AG04450 (cell line): ENCODE measurements at regions of chrX and their contacts with region 1.

Region 1: DNA sequence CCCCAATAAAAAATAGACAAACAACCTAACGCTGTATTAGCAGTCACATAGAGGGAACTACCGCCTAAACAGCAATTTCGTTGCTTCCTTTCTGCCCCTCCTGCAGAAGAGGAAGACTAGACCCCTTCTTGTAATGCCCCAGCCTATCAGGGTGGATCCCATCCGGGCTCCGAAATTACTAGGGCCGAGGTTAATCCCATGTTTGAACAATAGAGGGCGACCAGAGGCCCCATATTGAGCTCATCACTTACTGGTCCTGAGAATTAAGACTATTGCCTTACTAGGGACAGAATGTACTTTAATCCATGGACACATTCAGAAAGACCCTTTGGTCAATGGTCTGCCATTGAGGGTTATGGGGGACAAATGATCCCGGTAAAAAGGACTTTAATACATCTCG is 11.8 kb upstream of the ZNF630 start:
- DNase-seq: peak; percentile 2
- H3K4me3 ChIP-seq: no peak overlapping the region
- H3K27ac ChIP-seq: no peak overlapping the region
- H3K27me3 ChIP-seq: no peaks in the 10 kb centered on the region
- CTCF ChIP-seq: peak; percentile 63

Region 2: DNA sequence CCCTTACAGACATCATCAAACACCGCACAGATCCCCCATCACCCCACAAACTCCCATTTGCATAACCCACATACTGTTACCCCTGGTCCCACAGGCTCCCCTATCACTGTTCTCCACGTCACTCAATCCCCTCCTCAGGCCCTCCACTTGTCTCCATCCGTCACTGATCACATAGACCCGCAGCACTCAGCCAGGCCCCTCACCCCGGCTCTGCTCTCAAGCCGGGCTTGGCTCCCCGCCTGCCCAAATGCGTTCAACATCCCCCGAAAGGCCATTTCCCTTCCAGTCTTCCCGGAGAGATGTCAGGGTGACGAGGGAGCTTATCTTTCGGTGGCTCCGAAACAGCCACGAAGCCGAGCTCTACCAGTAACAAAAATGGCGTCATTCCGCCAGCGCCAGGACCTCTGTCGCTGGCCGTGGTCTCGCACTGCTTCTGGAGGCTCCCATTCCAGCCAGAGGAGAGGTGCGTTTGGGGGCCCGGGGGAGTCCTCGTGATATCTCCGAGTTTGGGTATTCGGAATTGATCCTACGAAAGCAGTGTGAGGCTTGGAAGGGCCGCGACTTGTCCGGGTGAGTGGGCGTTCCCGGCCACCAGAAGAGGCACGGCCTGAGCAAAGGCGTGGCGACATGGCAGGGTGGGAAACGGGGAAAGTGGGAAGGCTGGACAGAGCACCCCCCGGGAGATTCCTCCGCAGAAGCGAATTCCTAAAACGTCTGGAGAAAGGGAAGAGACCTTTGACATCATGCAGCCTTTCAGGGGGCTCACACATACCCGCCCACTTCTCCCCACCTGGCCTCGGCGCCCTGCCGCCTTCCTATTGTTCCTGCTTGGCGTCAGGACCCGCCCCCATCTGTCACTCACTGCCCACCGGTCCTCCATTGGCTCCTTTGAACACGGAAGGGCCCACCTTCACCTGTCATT is 11.9 kb before region 1 on chrX and contains the start of gene ZNF630:
- CTCF ChIA-PET with region 1: no interaction called
- POLR2A ChIA-PET with region 1: no interaction called
- DNase-seq: no peak
- H3K4me3 ChIP-seq: peak within 1 kb of the TSS; percentile 54
- H3K27ac ChIP-seq: no peak within 1 kb of the TSS
- H3K27me3 ChIP-seq: no peaks in the 10 kb centered on the region
- CTCF ChIP-seq: no peak
- polyA plus RNA-seq, gene ZNF630: 0.69 and 0.77 TPM in 2 replicates

Region 3: DNA sequence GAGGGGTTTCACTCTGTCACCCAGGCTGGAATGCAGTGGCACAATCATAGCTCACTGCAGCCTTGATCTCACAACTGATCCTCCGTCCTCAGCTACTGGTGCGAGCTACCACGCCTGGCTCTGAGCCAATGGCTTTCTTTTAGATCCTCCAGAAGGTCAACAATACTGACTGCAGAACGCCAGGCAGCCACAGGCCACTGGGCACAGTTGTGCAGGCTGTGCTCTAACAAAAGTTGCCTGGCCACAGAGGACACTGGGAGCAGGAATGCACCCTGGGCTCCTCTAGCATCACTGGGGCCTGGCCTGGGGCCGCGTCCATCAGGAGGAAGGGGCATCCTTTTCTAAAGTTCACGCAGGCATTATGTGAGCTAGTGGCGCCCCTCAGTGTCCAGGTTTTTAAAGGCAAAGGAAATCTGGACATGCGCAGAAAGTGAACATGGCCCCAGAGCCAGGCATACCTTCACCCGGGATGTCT is 410.7 kb after region 1 on chrX:
- CTCF ChIA-PET with region 1: interaction called, 17 read pairs
- POLR2A ChIA-PET with region 1: no interaction called
- DNase-seq: no peak
- H3K4me3 ChIP-seq: no peak overlapping the region
- H3K27ac ChIP-seq: no peak overlapping the region
- H3K27me3 ChIP-seq: no peaks in the 10 kb centered on the region
- CTCF ChIP-seq: peak; percentile 45